Activated CD4-positive, alpha-beta T cell treated with anti-CD3 and anti-CD28 coated beads, Interleukin-2, amount 10 ng/mL, durations not matched to agents 24 days and 14 days (primary cell): ENCODE measurements at regions of chr5 and their contacts with region 1.

Region 1: GRCh38 chr5:55110217-55110616 is 7.8 kb downstream of the GZMA start:
- DNase-seq: no peak
- H3K4me3 Mint-ChIP-seq: no peak overlapping the region
- H3K27ac Mint-ChIP-seq: no peak overlapping the region
- H3K4me1 Mint-ChIP-seq: peaks cover 41% of the 10 kb centered on the region
- H3K27me3 Mint-ChIP-seq: peaks cover 6% of the 10 kb centered on the region

Region 2: DNA sequence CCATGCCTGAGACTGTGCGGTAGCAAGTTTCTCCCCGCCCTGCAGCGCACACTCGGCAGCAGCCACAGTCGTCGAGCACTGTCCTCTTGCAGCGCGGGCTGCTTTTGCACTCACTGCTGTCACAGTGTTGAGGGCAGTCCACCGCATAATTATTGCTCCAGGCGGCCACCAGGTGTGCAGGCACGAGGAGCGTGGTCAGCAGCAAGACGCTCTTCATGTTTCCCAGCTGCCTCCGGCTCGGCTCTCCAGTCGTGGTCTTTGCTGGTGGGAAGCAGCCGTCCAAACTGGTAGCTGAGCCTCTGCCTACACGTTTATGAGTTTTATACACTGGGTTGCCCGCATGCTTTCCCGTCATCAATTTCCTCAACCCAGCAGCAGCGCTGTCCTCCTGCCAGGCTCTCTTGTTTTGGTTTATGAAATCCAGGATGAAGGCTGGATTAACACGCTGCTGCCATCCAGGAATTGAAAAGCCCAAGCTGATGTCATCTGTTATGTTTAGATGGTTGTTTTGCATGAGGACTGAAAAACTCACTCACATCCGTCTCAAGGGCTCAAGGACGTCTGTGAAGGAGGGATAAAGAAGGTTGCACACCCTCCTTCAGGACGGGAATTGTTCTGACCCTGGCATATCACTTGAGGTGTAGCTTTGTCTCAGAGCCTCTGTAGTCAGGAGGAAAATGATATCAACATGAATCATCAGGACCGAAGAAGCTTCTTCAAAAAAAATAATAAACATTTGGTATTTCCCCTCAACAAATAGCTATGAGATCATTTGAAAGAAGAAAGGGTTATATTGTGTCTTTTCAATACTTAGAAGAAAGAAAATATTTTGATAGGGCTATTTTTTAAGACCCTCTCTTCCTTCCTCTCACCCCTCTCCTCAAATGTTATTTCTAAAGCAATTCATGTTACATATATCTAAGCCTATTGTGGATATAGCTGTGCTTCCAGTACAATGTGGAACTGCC is 124.6 kb before region 1 on chr5 and contains the start of gene ESM1:
- intact Hi-C with region 1: loop called (anchors 5 kb)
- DNase-seq: no peak
- H3K4me3 Mint-ChIP-seq: peak within 1 kb of the TSS; percentile 31
- H3K27ac Mint-ChIP-seq: no peak within 1 kb of the TSS
- H3K4me1 Mint-ChIP-seq: peaks cover 56% of the 10 kb centered on the region
- H3K27me3 Mint-ChIP-seq: peaks cover 30% of the 10 kb centered on the region
- total RNA-seq, gene ESM1: not detected in 2 replicates

Region 3: GRCh38 chr5:55254802-55255201 is 144.6 kb after region 1 on chr5:
- intact Hi-C with region 1: no loop called
- DNase-seq: no peak
- H3K4me3 Mint-ChIP-seq: no peak overlapping the region
- H3K27ac Mint-ChIP-seq: no peak overlapping the region
- H3K4me1 Mint-ChIP-seq: no peaks in the 10 kb centered on the region
- H3K27me3 Mint-ChIP-seq: peaks cover 9% of the 10 kb centered on the region